Activated CD4-positive, alpha-beta T cell treated with anti-CD3 and anti-CD28 coated beads for 36 hours (primary cell): ENCODE measurements at regions of chr10 and their contacts with region 1.

Region 1: GRCh38 chr10:43407576-43408330 is 1.2 kb downstream of the HNRNPF start:
- DNase-seq: peak; percentile 95
- ATAC-seq: peak; percentile 31
- H3K4me3 Mint-ChIP-seq: peak overlapping the region; percentile 99
- H3K27ac Mint-ChIP-seq: peak overlapping the region; percentile 100
- H3K4me1 Mint-ChIP-seq: peaks cover 30% of the 10 kb centered on the region
- H3K27me3 Mint-ChIP-seq: no peaks in the 10 kb centered on the region

Region 2: DNA sequence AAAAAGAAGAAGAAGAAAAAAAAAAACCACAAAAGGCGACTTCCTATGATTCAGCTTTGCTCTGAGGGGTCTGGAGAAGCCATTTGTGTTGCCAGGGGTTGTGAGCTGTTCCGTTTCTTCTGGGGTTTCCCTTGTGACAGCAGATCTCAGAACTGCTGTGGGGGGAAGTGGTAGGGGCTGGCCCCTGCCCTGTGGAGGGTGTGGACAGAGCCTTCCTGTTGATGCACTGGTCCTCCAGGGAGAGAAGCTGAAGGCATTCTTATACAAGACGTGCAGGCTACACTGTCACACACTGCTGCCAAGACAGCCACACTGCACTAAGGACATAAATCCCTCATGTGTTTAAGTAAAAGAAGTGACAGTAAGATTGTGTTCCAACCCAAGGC is 286.8 kb before region 1 on chr10:
- CTCF ChIA-PET with region 1: no interaction called
- POLR2A ChIA-PET with region 1: interaction called, 12 read pairs
- intact Hi-C with region 1: no loop called
- DNase-seq: peak; percentile 84
- ATAC-seq: peak; percentile 99
- H3K4me3 Mint-ChIP-seq: peak overlapping the region; percentile 16
- H3K27ac Mint-ChIP-seq: peak overlapping the region; percentile 82
- H3K4me1 Mint-ChIP-seq: peaks cover 19% of the 10 kb centered on the region
- H3K27me3 Mint-ChIP-seq: no peaks in the 10 kb centered on the region

Region 3: GRCh38 chr10:43396928-43397624 is 10.7 kb before region 1 on chr10:
- CTCF ChIA-PET with region 1: interaction called, 9 read pairs
- POLR2A ChIA-PET with region 1: interaction called, 24 read pairs
- intact Hi-C with region 1: loop called (anchors 1 kb)
- DNase-seq: peak; percentile 93
- ATAC-seq: peak; percentile 72
- H3K4me3 Mint-ChIP-seq: peak overlapping the region; percentile 99
- H3K27ac Mint-ChIP-seq: peak overlapping the region; percentile 96
- H3K4me1 Mint-ChIP-seq: peaks cover 63% of the 10 kb centered on the region
- H3K27me3 Mint-ChIP-seq: no peaks in the 10 kb centered on the region

Region 4: DNA sequence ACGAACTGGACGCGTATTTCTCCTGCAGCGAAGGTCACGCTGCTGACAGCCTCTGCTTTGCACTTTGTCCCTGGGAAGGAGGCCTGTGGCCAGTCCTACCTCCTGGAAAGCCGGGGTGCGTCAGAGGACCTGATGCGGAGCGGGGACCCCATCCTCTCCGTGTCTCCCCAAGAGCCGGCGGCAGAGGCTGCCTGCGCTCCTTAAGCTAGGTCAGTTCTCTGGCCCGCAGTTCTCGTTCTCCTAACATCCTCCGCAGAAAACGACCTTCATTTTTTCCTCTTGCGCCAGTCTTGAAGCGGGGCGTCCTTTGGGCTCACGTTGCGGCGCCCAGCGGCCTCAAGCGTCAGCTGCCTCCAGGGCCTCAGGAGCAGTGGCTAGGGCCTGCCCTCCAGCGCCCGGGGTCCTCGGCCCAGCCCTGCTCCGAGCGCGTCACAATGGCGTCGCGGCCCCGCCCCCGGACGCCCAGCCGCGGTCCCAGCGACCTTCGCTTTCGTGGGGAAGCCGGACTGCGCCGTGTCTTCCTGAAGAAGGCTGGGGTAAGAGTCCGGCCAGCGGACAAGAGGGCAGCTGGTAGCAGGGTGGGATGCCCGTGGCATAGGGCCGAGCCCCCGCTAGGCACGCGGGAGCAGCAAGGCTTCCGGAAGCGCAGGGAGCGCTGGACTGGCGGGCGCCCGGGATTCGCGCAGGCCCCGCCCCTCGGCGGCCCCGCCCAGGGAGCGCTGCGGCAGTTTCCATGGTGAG is 28.8 kb after region 1 on chr10 and contains the start of gene ZNF487:
- CTCF ChIA-PET with region 1: no interaction called
- POLR2A ChIA-PET with region 1: interaction called, 3 read pairs
- intact Hi-C with region 1: loop called (anchors 1 kb)
- DNase-seq: peak; percentile 92
- ATAC-seq: peak; percentile 97
- H3K4me3 Mint-ChIP-seq: peak within 1 kb of the TSS; percentile 98
- H3K27ac Mint-ChIP-seq: peak within 1 kb of the TSS; percentile 95
- H3K4me1 Mint-ChIP-seq: peaks cover 17% of the 10 kb centered on the region
- H3K27me3 Mint-ChIP-seq: no peaks in the 10 kb centered on the region
- total RNA-seq, gene ZNF487: 1.8 to 2.3 TPM

Region 5: GRCh38 chr10:43667317-43667731 is 259.6 kb after region 1 on chr10:
- CTCF ChIA-PET with region 1: no interaction called
- POLR2A ChIA-PET with region 1: no interaction called
- intact Hi-C with region 1: no loop called
- DNase-seq: peak; percentile 29
- ATAC-seq: peak; percentile 36
- H3K4me3 Mint-ChIP-seq: no peak overlapping the region
- H3K27ac Mint-ChIP-seq: no peak overlapping the region
- H3K4me1 Mint-ChIP-seq: peaks cover 6% of the 10 kb centered on the region
- H3K27me3 Mint-ChIP-seq: peaks cover 36% of the 10 kb centered on the region

Region 6: GRCh38 chr10:43816351-43817321 is 408.9 kb after region 1 on chr10:
- CTCF ChIA-PET with region 1: no interaction called
- POLR2A ChIA-PET with region 1: no interaction called
- intact Hi-C with region 1: loop called in 1 of 2 experiments (anchors 5 kb)
- DNase-seq: peak; percentile 90
- ATAC-seq: peak; percentile 95
- H3K4me3 Mint-ChIP-seq: peak overlapping the region; percentile 16
- H3K27ac Mint-ChIP-seq: peak overlapping the region; percentile 80
- H3K4me1 Mint-ChIP-seq: peaks cover 41% of the 10 kb centered on the region
- H3K27me3 Mint-ChIP-seq: no peaks in the 10 kb centered on the region